Head of caudate nucleus (tissue), 42 donors: ENCODE measurements at regions of chr14 and their contacts with region 1.

Region 1: GRCh38 chr14:68795597-68796417 is 2.9 kb upstream of the ZFP36L1 start:
- DNase-seq: peak in 33 of 42 donors; percentile 48 to 82 (median 63)

Region 2: GRCh38 chr14:68627880-68628607 is 167.8 kb before region 1 on chr14:
- intact Hi-C with region 1: loop called (anchors 10 kb)
- DNase-seq: peak; percentile 69 to 95 (median 89)